ENCODE measurements at regions of chr15 and their contacts with region 1.

Region 1: DNA sequence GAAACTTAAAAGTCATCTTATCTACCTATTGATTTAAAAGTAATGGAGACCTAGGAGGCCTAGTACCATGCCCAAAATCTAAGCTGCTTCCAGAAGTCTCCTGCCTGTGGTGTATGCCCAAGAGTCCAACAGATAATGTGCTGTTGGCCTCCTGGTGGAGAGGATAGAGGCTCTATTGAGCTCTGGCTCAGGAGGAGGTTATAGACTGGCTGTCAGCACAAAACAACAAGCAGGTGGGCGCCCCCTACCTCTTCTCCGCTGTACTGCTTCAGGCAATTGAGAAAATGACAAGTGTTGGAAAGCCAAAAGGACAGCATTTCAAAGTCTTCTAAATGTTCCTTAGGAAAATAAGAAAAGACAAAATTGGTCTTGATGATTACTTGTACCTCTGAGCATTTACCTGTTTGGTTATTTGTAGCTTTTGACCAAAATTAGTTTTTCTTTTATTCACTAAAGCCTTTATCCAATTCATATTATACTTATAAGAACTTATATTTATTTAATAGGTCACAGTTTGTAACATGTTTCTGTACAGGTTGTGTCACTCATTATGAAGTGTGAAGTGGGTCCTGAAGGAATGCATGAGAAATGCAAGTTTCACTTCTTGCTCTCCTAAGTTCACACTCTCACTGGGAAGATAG is 17.2 kb upstream of the GNB5 start:
- DNase-seq: no peak
- ATAC-seq: peak; percentile 99
- H3K4me3 ChIP-seq: no peak overlapping the region
- H3K27ac ChIP-seq: no peak overlapping the region
- H3K4me1 ChIP-seq: no peaks in the 10 kb centered on the region
- H3K27me3 ChIP-seq: no peaks in the 10 kb centered on the region
- CTCF ChIP-seq: peak; percentile 84 to 89 (median 88)
- EP300 ChIP-seq: no peak
- POLR2A ChIP-seq: no peak
- RAD21 ChIP-seq: peak; percentile 71

Region 2: GRCh38 chr15:52105846-52106245 is 102.6 kb before region 1 on chr15:
- CTCF ChIA-PET with region 1: no interaction called
- POLR2A ChIA-PET with region 1: no interaction called
- RAD21 ChIA-PET with region 1: no interaction called
- SMC1A ChIA-PET with region 1: no interaction called
- in situ Hi-C with region 1: no loop called
- intact Hi-C with region 1: no loop called
- DNase-seq: no peak
- ATAC-seq: no peak
- H3K4me3 ChIP-seq: no peak overlapping the region
- H3K27ac ChIP-seq: no peak overlapping the region
- H3K4me1 ChIP-seq: peaks cover 44% of the 10 kb centered on the region
- H3K27me3 ChIP-seq: no peaks in the 10 kb centered on the region
- CTCF ChIP-seq: no peak
- EP300 ChIP-seq: no peak
- POLR2A ChIP-seq: no peak
- RAD21 ChIP-seq: no peak

Region 3: DNA sequence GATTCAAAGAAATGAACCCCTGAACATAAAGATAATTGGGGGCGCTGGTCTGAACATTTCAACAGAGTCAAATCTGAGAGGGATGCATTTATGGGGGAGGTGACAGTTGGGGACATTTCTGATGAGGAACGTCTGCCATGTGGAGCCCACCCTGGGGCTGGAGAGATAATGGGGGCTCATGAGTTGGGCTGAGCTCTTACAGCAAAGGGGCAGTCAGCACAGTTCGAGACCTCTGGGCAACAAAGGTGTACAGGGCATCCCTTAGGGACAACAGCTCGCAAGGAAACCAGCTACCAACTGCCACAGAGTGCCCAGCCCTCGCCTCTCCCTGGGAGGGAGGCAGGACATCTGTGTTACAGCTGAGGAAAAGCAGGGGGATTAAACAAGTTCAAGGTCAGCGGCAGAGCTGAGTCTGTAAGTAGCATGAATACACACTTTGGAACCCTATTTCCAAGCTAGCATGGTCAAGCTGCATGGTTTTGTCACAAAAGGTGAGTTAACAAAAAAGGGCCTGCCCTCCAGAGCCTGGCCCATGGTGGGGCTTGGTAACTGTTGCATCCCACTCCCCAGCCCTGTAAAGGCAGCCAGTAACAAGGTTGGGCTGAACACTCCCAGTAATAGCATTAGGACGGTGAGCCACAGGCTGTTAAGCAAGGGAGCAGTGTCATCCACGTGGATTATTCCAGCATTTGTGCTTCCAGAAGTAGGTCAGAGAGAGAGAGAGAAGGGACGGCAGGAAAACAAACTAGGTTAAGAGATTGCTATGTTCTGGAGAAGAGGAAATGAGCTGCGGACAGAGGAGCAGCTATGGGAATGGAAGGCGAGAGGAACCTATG is 21.6 kb before region 1 on chr15:
- CTCF ChIA-PET with region 1: interaction called, 52 read pairs
- POLR2A ChIA-PET with region 1: interaction called, 3 read pairs
- RAD21 ChIA-PET with region 1: interaction called, 20 read pairs
- SMC1A ChIA-PET with region 1: interaction called, 15 read pairs
- in situ Hi-C with region 1: no loop called
- intact Hi-C with region 1: loop called (anchors 1 kb)
- DNase-seq: no peak
- ATAC-seq: no peak
- H3K4me3 ChIP-seq: no peak overlapping the region
- H3K27ac ChIP-seq: no peak overlapping the region
- H3K4me1 ChIP-seq: no peaks in the 10 kb centered on the region
- H3K27me3 ChIP-seq: no peaks in the 10 kb centered on the region
- CTCF ChIP-seq: no peak
- EP300 ChIP-seq: no peak
- POLR2A ChIP-seq: no peak
- RAD21 ChIP-seq: no peak

Region 4: GRCh38 chr15:52193791-52194190 is 14.6 kb before region 1 on chr15:
- CTCF ChIA-PET with region 1: interaction called, 12 read pairs
- POLR2A ChIA-PET with region 1: no interaction called
- RAD21 ChIA-PET with region 1: no interaction called
- SMC1A ChIA-PET with region 1: interaction called, 10 read pairs
- in situ Hi-C with region 1: no loop called
- intact Hi-C with region 1: no loop called
- DNase-seq: no peak
- ATAC-seq: no peak
- H3K4me3 ChIP-seq: no peak overlapping the region
- H3K27ac ChIP-seq: no peak overlapping the region
- H3K4me1 ChIP-seq: peaks cover 3% of the 10 kb centered on the region; the same call in 1 of the 2 replicates
- H3K27me3 ChIP-seq: no peaks in the 10 kb centered on the region
- CTCF ChIP-seq: no peak
- EP300 ChIP-seq: no peak
- POLR2A ChIP-seq: no peak
- RAD21 ChIP-seq: no peak